ENCODE measurements at regions of chr13 and their contacts with region 1.

Region 1: DNA sequence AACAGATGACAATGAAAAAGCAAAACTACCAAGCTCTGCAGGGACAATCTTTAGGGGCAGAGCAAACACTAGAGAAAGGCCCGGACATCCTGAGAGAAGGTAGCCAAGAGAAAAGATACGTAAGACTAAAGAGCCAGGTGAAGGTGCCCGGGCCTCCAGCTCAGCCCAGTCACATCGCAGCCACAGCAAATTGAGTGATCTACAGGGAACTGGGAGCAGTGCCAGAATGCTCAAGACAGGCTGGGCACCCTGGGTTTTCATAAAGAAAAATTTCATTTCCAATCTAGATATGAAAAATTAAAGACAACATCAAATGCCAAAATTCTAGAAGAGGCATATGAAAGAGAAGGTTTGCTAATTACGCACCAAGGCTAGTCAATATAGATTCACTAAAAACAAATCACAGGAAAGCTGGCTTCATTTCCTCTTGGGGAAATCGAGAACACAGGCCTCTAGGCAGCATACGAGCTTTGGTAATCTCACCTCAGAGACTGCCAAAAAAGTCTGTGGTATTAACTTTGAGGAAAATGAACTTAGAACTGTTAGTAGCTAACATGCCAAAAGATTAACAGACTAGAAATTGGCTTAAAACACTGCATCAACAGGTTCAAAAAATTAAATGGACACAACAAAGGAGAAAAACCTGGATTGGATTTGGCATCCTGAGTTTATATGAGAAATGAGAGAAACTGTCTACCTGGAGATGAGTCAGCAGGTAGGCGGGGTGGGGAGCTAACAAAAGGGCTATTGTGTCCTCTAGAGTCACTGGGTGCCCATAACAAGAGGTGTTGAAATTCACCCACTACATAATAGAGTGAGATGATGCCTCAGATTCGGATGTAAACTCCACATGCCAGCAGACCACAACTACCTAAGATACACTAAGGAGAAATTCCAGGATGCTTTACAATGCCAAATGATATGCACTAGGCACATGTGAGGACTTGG is 6.6 kb downstream of the ANKRD10 start:
- DNase-seq: no peak
- H3K4me3 ChIP-seq: no peak overlapping the region
- H3K27ac ChIP-seq: no peak overlapping the region
- H3K4me1 ChIP-seq: peaks cover 33% of the 10 kb centered on the region
- H3K27me3 ChIP-seq: no peaks in the 10 kb centered on the region
- CTCF ChIP-seq: no peak
- EP300 ChIP-seq: no peak
- POLR2A ChIP-seq: no peak

Region 2: DNA sequence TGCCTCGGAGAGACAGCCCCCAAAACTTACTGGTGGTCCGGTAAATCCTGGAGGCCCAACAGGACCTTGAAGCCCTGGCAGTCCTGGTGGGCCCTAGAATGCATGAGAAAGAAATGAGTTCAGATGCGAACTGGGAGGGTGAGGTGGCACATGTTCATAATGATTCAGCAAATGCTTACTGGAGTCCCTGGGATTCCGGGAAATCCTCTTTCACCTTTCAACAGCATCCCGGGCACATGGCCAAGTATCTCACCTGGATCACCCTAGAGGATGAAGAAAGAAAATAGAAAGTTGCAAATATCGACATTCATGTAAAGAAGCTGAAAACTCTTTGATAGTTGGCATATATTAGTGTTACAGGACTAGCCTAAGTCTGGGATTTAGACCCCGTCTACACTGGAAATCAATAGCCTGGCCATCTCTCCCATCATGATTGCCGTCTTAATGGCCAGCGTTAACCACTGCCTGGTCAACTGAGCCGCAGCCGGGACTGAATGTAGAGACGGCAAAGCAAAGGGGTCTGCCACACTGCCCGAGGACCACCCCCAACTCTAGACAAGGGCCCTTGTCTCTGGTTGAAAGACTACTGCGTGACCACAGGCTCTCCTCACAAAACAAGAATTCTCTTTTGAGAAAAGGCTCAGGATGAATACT is 698.1 kb before region 1 on chr13:
- intact Hi-C with region 1: loop called in 1 of 4 experiments (anchors 5 kb)
- DNase-seq: no peak
- H3K4me3 ChIP-seq: no peak overlapping the region
- H3K27ac ChIP-seq: no peak overlapping the region
- H3K4me1 ChIP-seq: no peaks in the 10 kb centered on the region
- H3K27me3 ChIP-seq: no peaks in the 10 kb centered on the region
- CTCF ChIP-seq: no peak
- EP300 ChIP-seq: no peak
- POLR2A ChIP-seq: no peak

Measured in ovary (tissue), 10 donors.